ENCODE measurements at regions of chr12 and their contacts with region 1.

Region 1: DNA sequence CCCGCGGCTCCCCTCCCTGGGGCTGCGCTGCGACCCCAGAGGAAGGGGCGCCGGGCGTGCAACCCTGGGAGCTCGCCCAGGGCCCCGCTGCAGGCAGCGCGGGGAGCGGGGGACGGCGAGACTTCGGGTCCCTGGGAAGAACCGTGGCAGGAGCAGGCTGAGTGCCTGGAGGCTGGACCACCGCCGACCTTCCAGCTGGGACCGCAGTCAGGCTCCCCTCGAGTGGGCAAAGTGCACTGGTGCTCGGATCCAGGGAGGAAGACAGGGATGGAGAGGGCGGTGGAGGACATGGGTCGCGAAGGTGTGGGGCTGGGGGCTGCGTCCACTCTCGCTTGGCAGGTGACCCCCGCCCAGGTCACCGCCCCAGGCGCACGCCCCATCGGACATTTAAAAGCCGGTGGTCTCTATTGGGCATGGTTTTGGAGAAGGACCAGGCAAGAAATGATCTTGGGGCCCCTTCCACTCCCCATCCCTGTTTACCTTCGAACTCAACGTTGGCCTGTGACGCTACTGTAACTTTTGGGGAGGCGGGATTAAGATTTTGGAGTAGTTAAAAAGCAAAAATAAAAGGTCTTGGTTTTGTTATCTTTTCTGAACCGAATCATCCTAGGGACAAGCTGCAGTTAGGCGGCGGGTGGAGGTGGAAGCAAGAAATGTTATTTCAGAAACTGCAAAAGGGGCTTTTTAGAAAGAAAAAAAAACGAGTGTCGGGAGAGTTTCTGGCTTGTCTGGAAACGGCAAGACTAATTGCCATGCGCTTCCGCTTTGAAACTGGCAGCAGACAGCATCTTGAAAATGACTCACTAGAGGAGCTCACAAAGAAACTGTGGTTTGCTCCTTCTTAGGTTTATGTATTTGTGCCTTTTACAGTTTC is 1.0 kb downstream of the ELK3 start:
- DNase-seq: peak; percentile 45
- ATAC-seq: peak; percentile 57
- H3K4me3 Mint-ChIP-seq: peak overlapping the region; percentile 99
- H3K27ac Mint-ChIP-seq: peak overlapping the region; percentile 99
- H3K4me1 Mint-ChIP-seq: peaks cover 72% of the 10 kb centered on the region
- H3K27me3 Mint-ChIP-seq: no peaks in the 10 kb centered on the region
- CTCF ChIP-seq: no peak

Region 2: GRCh38 chr12:96035278-96036236 is 159.7 kb before region 1 on chr12 and contains the start of gene LTA4H:
- CTCF ChIA-PET with region 1: no interaction called
- POLR2A ChIA-PET with region 1: interaction called, 13 read pairs
- intact Hi-C with region 1: loop called (anchors 1 kb)
- DNase-seq: peak; percentile 88
- ATAC-seq: peak; percentile 86
- H3K4me3 Mint-ChIP-seq: no peak within 1 kb of the TSS
- H3K27ac Mint-ChIP-seq: no peak within 1 kb of the TSS
- H3K4me1 Mint-ChIP-seq: peaks cover 26% of the 10 kb centered on the region
- H3K27me3 Mint-ChIP-seq: no peaks in the 10 kb centered on the region
- CTCF ChIP-seq: no peak
- total RNA-seq, gene LTA4H: 119 and 124 TPM in 2 replicates

Region 3: GRCh38 chr12:96140174-96140573 is 55.0 kb before region 1 on chr12:
- CTCF ChIA-PET with region 1: no interaction called
- POLR2A ChIA-PET with region 1: no interaction called
- intact Hi-C with region 1: loop called (anchors 5 kb)
- DNase-seq: no peak
- ATAC-seq: no peak
- H3K4me3 Mint-ChIP-seq: no peak overlapping the region
- H3K27ac Mint-ChIP-seq: no peak overlapping the region
- H3K4me1 Mint-ChIP-seq: peaks cover 28% of the 10 kb centered on the region
- H3K27me3 Mint-ChIP-seq: no peaks in the 10 kb centered on the region
- CTCF ChIP-seq: no peak

Region 4: DNA sequence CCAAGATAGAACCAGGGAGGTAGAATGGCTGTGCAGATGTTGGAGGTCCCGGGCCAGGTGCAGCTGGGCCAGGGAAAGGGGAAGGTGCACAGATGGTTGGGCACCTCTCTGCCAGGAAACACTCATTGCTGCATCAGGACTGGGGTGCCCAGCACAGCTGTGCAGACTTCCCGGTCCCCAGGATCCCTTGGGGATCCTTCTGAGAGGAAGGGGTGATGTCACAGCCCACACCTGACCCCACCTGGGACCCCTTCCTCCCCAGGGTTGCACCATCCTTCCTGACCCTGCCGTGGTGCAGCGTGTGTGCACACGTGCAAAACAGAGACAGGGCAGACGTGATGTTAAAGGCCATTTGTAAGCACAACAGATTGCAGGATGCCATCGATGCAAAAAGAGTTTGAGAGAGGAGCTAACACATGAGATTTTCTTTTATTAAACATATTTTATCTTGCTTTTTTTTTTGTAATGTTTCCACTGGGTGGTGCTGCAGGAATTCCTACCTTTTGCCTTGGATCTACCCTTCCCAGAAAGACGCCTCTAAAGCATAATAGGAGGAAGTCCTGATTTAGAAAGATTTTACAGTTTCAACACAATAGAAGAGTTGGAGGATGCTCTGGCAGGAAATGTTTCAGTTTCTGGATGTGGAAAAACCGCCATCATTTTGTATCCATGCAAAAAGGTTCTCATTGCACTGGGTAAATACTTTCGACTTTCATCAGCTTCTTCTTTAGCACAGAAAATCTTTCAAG is 13.8 kb after region 1 on chr12:
- CTCF ChIA-PET with region 1: interaction called, 4 read pairs
- POLR2A ChIA-PET with region 1: interaction called, 174 read pairs
- intact Hi-C with region 1: loop called (anchors 1 kb)
- DNase-seq: peak; percentile 54
- ATAC-seq: peak; percentile 81
- H3K4me3 Mint-ChIP-seq: peak overlapping the region; percentile 64
- H3K27ac Mint-ChIP-seq: peak overlapping the region; percentile 82
- H3K4me1 Mint-ChIP-seq: peaks cover 99% of the 10 kb centered on the region
- H3K27me3 Mint-ChIP-seq: no peaks in the 10 kb centered on the region
- CTCF ChIP-seq: no peak

Measured in activated B cell treated with CpG ODN at 0.5 μM for 24 hours (primary cell).